WTC11 (cell line): ENCODE measurements at regions of chr2 and their contacts with region 1.

Region 1: GRCh38 chr2:235595422-235596010 is 101.7 kb downstream of the AGAP1 start:
- DNase-seq: peak; percentile 79
- ATAC-seq: peak; percentile 53; the same call in 1 of the 2 replicates
- H3K4me3 Mint-ChIP-seq: no peak overlapping the region
- H3K27ac Mint-ChIP-seq: no peak overlapping the region
- H3K4me1 Mint-ChIP-seq: peaks cover 52% of the 10 kb centered on the region
- H3K27me3 Mint-ChIP-seq: no peaks in the 10 kb centered on the region
- CTCF ChIP-seq: peak; percentile 66

Region 2: DNA sequence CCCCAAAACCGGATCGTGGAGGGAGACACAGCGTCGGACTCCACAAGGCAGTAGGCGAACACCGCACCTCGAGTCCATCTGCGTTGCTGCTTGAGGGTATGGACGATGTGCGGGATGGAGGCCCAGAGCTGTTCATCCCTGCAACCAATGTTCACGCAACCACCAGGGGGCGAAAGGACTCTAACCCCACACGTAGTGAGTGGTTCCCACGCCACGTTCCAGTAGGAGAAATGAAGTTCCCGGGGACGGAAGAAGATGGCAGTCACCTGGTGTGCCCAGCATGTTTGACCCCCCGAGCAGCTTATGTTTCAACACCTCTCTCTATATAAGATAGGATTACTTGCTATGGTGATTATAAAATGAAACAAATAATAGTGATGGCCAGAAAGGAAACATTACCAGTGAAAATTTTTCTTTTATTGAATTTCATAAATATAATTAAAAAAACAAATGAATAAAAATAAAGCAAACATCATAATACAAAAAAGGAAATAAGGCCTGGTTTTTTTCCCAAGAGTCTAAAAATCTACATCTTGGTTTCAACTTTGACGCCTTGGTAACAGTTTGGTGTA is 459.4 kb before region 1 on chr2:
- CTCF ChIA-PET with region 1: interaction called, 13 read pairs
- POLR2A ChIA-PET with region 1: no interaction called
- DNase-seq: peak; percentile 83
- ATAC-seq: peak; percentile 75
- H3K4me3 Mint-ChIP-seq: no peak overlapping the region
- H3K27ac Mint-ChIP-seq: no peak overlapping the region
- H3K4me1 Mint-ChIP-seq: no peaks in the 10 kb centered on the region
- H3K27me3 Mint-ChIP-seq: peaks cover 40% of the 10 kb centered on the region
- CTCF ChIP-seq: peak; percentile 58

Region 3: DNA sequence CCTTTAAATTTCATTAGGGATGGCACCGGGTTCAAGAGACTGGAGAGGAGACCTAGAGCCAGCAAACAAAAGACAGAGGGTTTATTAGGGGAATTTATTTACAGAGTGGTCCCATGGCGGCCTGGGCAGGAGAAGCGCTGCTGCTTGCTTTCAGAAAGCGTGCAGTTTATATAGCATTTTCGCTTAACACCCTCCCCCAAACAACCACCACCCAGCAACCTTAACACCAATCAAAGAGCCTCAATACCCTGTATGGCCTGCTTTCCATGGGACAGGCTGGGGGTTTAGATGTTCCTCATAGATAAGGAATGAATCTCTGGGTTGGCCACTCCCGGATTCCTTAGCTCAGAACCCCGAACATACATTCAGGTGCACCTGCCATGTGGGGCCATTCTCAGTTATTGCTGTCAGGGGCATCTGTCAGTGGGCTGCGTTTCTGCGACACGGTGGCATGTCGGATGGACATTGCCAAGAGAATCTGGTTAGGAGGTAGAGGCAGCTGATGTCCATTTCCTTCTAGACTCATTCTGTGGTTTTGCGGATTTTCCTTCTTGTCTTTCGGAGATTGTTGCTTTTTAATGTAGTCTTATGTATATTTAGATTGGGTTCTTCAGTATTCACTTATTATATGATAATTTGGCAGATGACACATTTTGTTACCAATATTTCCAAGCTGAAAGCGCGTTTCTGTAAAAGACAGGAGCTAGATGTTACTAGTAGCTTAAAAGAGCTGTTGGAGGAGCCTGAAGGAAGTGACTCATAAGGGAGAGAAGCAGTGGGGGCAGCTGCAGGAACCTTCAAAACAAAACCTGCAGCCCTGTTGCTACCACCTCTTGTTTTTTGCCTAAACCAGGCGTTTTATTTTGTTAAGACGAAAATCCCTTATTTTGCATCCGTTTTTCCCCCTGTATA is 94.5 kb before region 1 on chr2:
- CTCF ChIA-PET with region 1: interaction called, 22 read pairs
- POLR2A ChIA-PET with region 1: no interaction called
- DNase-seq: no peak
- ATAC-seq: 0 out of 2 replicates have a peak, but pooled peaks have one; percentile 7
- H3K4me3 Mint-ChIP-seq: peak overlapping the region; percentile 48
- H3K27ac Mint-ChIP-seq: peak overlapping the region; percentile 94
- H3K4me1 Mint-ChIP-seq: peaks cover 85% of the 10 kb centered on the region
- H3K27me3 Mint-ChIP-seq: peaks cover 3% of the 10 kb centered on the region
- CTCF ChIP-seq: no peak

Region 4: GRCh38 chr2:235527806-235528469 is 67.6 kb before region 1 on chr2:
- CTCF ChIA-PET with region 1: no interaction called
- POLR2A ChIA-PET with region 1: no interaction called
- DNase-seq: peak; percentile 44
- ATAC-seq: peak; percentile 72
- H3K4me3 Mint-ChIP-seq: no peak overlapping the region
- H3K27ac Mint-ChIP-seq: peak overlapping the region; percentile 30; the same call in 1 of the 2 replicates
- H3K4me1 Mint-ChIP-seq: peaks cover 45% of the 10 kb centered on the region
- H3K27me3 Mint-ChIP-seq: no peaks in the 10 kb centered on the region
- CTCF ChIP-seq: no peak

Region 5: DNA sequence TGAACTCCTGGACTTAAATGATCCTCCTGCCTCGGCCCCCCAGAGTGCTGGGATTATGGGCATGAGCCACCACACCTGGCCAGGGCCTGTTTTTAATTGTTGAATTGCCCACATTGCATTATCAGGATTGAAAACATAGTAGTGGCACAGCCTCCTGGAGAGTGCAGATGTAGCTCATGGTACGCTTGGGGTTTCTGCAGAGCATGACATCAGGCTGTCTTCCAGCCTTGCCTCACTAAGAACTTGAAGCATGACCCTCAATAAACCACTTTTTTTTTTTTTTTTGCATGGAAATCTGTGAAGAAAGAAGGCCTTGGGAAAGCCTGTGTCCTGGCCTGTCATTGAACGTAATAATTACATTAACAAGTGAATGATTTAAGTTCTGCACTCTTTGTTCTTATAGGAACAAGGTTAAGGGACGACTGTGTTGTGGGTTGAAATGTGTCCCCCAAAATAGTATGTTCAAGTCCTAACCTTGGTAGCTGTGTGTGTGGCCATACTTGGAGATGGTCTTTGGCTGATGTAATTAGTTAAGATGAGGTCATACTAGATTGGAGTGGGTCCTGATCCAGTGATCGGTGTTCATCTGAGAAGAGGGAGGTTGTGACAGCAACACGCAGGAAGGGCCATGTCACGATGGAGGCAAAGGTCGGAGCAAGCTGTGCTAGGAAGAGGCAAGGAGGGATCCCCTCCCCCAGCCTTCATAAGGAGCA is 11.4 kb before region 1 on chr2:
- CTCF ChIA-PET with region 1: interaction called, 11 read pairs
- POLR2A ChIA-PET with region 1: no interaction called
- DNase-seq: no peak
- ATAC-seq: no peak
- H3K4me3 Mint-ChIP-seq: no peak overlapping the region
- H3K27ac Mint-ChIP-seq: peak overlapping the region; percentile 44
- H3K4me1 Mint-ChIP-seq: peaks cover 71% of the 10 kb centered on the region
- H3K27me3 Mint-ChIP-seq: no peaks in the 10 kb centered on the region; the same call in 1 of the 2 replicates
- CTCF ChIP-seq: no peak

Region 6: DNA sequence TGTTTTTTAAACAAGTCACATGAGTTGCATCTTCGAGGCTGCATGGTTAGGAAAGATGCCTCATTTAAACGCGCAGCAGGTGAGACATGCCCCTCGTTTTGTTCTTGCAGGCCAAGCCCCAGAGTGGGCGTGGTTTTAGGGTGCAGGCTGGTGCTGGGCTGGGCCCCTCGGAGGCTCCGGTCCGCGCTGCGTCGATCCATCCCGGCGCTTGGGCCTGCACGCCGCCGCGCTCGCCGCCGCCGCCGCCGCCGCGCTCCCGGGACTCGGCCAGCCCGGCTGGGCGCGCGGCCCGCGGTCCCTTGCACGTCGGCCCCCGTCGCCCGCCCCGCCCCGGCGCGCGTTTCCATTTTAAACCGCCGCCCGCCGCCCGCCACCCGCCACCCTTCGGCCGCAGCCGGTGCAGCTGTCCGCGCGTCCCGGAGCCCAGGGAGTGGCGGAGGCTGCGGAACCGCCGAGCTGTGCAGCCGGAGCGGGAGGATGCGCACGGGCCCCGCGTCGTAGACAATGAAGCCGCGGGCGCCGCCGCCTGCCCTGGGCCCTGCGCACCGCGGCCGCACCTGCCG is 73.8 kb after region 1 on chr2:
- CTCF ChIA-PET with region 1: interaction called, 22 read pairs
- POLR2A ChIA-PET with region 1: no interaction called
- DNase-seq: peak; percentile 90
- ATAC-seq: peak; percentile 80
- H3K4me3 Mint-ChIP-seq: peak overlapping the region; percentile 65
- H3K27ac Mint-ChIP-seq: peak overlapping the region; percentile 87; the same call in 1 of the 2 replicates
- H3K4me1 Mint-ChIP-seq: peaks cover 68% of the 10 kb centered on the region
- H3K27me3 Mint-ChIP-seq: peaks cover 14% of the 10 kb centered on the region
- CTCF ChIP-seq: no peak